ENCODE measurements at regions of chr9 and their contacts with region 1.

Region 1: GRCh38 chr9:9790216-9790872 is 822.5 kb downstream of the PTPRD start:
- DNase-seq: peak in 1 of 35 experiments; percentile 14
- ATAC-seq: no peak
- H3K4me3 ChIP-seq: no peak overlapping the region
- H3K4me3 Mint-ChIP-seq: no peak overlapping the region
- H3K27ac ChIP-seq: no peak overlapping the region
- H3K27ac Mint-ChIP-seq: no peak overlapping the region
- H3K4me1 ChIP-seq: no peaks in the 10 kb centered on the region
- H3K4me1 Mint-ChIP-seq: no peaks in the 10 kb centered on the region
- H3K27me3 ChIP-seq: no peaks in the 10 kb centered on the region
- H3K27me3 Mint-ChIP-seq: no peaks in the 10 kb centered on the region

Region 2: DNA sequence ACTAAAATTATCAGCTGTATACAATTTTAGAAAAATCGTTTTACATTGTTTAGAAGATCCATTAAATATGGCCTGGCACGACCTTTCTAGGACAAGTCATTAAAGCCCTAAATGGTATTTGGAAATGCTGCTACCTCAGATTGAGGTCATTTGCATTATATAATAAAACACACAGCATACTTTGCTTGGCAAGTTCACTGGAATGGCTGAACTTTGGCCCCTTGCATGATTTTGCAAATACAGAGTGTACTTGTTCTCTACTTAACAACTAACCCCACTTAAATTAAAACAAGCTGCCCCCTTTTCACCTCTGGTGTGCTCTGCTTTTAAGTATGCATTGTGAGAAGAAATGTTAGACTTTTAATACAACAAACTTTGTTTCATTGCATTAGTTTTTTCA is 37.6 kb before region 1 on chr9:
- CTCF ChIA-PET with region 1: interaction called in 1 of 2 experiments, 4 read pairs
- POLR2A ChIA-PET with region 1: interaction called in 1 of 2 experiments, 13 read pairs
- DNase-seq: no peak
- ATAC-seq: no peak
- H3K4me3 ChIP-seq: no peak overlapping the region
- H3K4me3 Mint-ChIP-seq: no peak overlapping the region
- H3K27ac ChIP-seq: no peak overlapping the region
- H3K27ac Mint-ChIP-seq: no peak overlapping the region
- H3K4me1 ChIP-seq: no peaks in the 10 kb centered on the region
- H3K4me1 Mint-ChIP-seq: no peaks in the 10 kb centered on the region
- H3K27me3 ChIP-seq: no peaks in the 10 kb centered on the region
- H3K27me3 Mint-ChIP-seq: no peaks in the 10 kb centered on the region

Region 3: GRCh38 chr9:10999646-11000045 is 1209.3 kb after region 1 on chr9:
- CTCF ChIA-PET with region 1: no interaction called
- POLR2A ChIA-PET with region 1: no interaction called
- DNase-seq: no peak
- ATAC-seq: no peak
- H3K4me3 ChIP-seq: no peak overlapping the region
- H3K4me3 Mint-ChIP-seq: no peak overlapping the region
- H3K27ac ChIP-seq: no peak overlapping the region
- H3K27ac Mint-ChIP-seq: no peak overlapping the region
- H3K4me1 ChIP-seq: no peaks in the 10 kb centered on the region
- H3K4me1 Mint-ChIP-seq: no peaks in the 10 kb centered on the region
- H3K27me3 ChIP-seq: no peaks in the 10 kb centered on the region
- H3K27me3 Mint-ChIP-seq: no peaks in the 10 kb centered on the region

Measured in T-cell (primary cell).